ENCODE measurements at regions of chr17 and their contacts with region 1.

Region 1: DNA sequence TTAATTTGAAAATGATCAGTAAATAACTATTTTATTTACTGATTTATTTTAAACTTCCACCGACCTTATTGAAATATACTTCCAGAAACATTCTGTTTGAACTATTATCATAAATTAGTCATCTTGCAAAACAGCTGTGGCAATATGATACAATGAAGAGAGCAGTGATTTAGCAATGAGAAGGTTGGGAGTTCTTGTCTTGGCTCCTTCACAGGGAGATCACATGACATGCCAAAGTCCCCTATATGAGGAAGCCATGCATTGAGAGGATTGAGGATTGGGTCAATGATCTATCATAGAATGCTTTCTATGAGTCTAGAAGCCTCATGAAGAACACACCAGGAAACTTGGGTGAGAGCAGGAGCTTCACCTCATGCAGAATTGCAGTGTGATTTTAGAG is 222.7 kb downstream of the LGALS9B start:
- DNase-seq: no peak
- ATAC-seq: no peak
- H3K4me3 ChIP-seq: no peak overlapping the region
- H3K4me3 Mint-ChIP-seq: peak overlapping the region in 1 of 10 donors; percentile 30
- H3K27ac ChIP-seq: no peak overlapping the region
- H3K27ac Mint-ChIP-seq: peak overlapping the region in 2 of 9 donors; percentile 17 to 38
- H3K4me1 ChIP-seq: peaks cover 0 to 37% of the 10 kb centered on the region in 2 donors
- H3K4me1 Mint-ChIP-seq: peaks cover 19 to 64% (median 59%) of the 10 kb centered on the region in 7 donors
- H3K27me3 ChIP-seq: no peaks in the 10 kb centered on the region
- H3K27me3 Mint-ChIP-seq: no peaks in the 10 kb centered on the region

Region 2: GRCh38 chr17:20133517-20133916 is 111.2 kb before region 1 on chr17:
- CTCF ChIA-PET with region 1: no interaction called
- POLR2A ChIA-PET with region 1: no interaction called
- intact Hi-C with region 1: no loop called
- DNase-seq: no peak
- ATAC-seq: no peak
- H3K4me3 ChIP-seq: no peak overlapping the region
- H3K4me3 Mint-ChIP-seq: no peak overlapping the region
- H3K27ac ChIP-seq: no peak overlapping the region
- H3K27ac Mint-ChIP-seq: no peak overlapping the region
- H3K4me1 ChIP-seq: no peaks in the 10 kb centered on the region
- H3K4me1 Mint-ChIP-seq: peaks cover 0 to 2% (median 0%) of the 10 kb centered on the region in 7 donors
- H3K27me3 ChIP-seq: no peaks in the 10 kb centered on the region
- H3K27me3 Mint-ChIP-seq: peaks cover 0 to 27% (median 0%) of the 10 kb centered on the region in 5 donors

Region 3: DNA sequence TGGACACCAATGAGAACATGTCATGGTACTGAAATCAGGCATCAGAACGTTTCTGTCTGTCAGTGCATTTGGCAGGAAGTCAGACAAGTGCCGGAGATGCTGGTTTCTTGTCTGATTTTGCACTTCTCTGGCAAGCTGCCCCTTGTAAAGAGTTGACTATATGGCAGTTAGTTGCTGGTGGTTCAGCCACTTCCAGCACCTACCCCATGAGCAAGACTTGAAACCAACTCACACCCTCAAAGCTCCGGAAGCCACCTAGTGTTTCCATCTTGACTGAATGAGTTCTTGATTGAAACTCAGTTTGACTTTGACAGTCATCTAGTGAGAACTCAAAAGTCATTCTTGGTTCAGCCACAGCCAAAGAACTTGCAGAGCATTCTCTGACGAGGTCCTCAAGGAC is 10.4 kb before region 1 on chr17:
- CTCF ChIA-PET with region 1: interaction called, 11 read pairs
- POLR2A ChIA-PET with region 1: interaction called, 45 read pairs
- intact Hi-C with region 1: loop called in 1 of 2 experiments (anchors 1 kb)
- DNase-seq: peak in 8 of 9 donors; percentile 58 to 79 (median 69)
- ATAC-seq: peak; percentile 93
- H3K4me3 ChIP-seq: peak overlapping the region; percentile 19
- H3K4me3 Mint-ChIP-seq: peak overlapping the region; percentile 64 to 84 (median 69)
- H3K27ac ChIP-seq: peak overlapping the region; percentile 26
- H3K27ac Mint-ChIP-seq: peak overlapping the region; percentile 74 to 92 (median 88)
- H3K4me1 ChIP-seq: peaks cover 4 to 24% of the 10 kb centered on the region in 2 donors
- H3K4me1 Mint-ChIP-seq: peaks cover 29 to 73% (median 60%) of the 10 kb centered on the region in 7 donors
- H3K27me3 ChIP-seq: no peaks in the 10 kb centered on the region
- H3K27me3 Mint-ChIP-seq: no peaks in the 10 kb centered on the region

Region 4: DNA sequence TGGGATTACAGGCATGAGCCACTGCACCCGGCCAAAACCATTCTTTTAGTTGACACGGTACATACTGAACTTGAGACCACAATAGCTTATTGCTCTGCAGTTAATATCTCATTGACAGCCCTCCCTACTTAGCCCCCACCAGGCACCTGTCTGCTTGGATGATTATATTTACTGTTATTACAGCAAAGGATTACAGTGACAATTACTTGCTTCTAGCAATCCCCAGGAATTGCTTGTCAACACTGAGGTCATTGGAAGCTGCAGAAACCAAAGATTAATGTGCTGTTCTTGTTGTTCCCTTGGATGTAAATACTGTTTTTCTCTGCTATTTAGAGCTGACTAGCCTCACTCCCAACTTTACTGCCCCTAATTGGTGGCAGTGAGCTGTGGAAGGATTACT is 11.5 kb after region 1 on chr17:
- CTCF ChIA-PET with region 1: no interaction called
- POLR2A ChIA-PET with region 1: interaction called, 14 read pairs
- intact Hi-C with region 1: loop called in 1 of 2 experiments (anchors 2 kb)
- DNase-seq: no peak
- ATAC-seq: no peak
- H3K4me3 ChIP-seq: no peak overlapping the region
- H3K4me3 Mint-ChIP-seq: no peak overlapping the region
- H3K27ac ChIP-seq: no peak overlapping the region
- H3K27ac Mint-ChIP-seq: peak overlapping the region in 5 of 9 donors; percentile 34 to 85 (median 53)
- H3K4me1 ChIP-seq: peaks cover 0 to 32% of the 10 kb centered on the region in 2 donors
- H3K4me1 Mint-ChIP-seq: peaks cover 21 to 81% (median 70%) of the 10 kb centered on the region in 7 donors
- H3K27me3 ChIP-seq: no peaks in the 10 kb centered on the region
- H3K27me3 Mint-ChIP-seq: no peaks in the 10 kb centered on the region

Region 5: DNA sequence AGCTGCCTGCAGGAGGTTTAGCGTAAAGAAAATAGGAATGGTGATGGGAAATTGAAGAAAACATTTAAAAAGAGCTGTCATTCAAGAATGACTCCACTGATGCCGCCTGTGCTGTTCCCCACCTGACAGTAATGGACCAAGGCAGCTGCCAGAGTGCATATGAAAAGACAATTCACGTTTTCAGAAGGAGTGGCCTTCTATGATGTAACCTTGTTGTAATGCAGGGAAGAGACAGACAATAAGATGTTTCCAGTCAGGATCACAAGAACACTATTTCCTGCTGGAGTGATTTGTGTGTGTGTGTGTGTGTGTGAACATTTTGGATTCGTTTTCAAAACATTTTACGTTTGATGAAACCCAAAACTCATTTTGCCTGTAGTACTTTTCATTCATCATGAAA is 18.9 kb after region 1 on chr17:
- CTCF ChIA-PET with region 1: interaction called, 3 read pairs
- POLR2A ChIA-PET with region 1: interaction called, 5 read pairs
- intact Hi-C with region 1: loop called in 1 of 2 experiments (anchors 2 kb)
- DNase-seq: no peak
- ATAC-seq: no peak
- H3K4me3 ChIP-seq: no peak overlapping the region
- H3K4me3 Mint-ChIP-seq: peak overlapping the region in 5 of 10 donors; percentile 15 to 75 (median 47)
- H3K27ac ChIP-seq: no peak overlapping the region
- H3K27ac Mint-ChIP-seq: peak overlapping the region in 8 of 9 donors; percentile 36 to 96 (median 80)
- H3K4me1 ChIP-seq: peaks cover 4 to 47% of the 10 kb centered on the region in 2 donors
- H3K4me1 Mint-ChIP-seq: peaks cover 27 to 90% (median 79%) of the 10 kb centered on the region in 7 donors
- H3K27me3 ChIP-seq: no peaks in the 10 kb centered on the region
- H3K27me3 Mint-ChIP-seq: no peaks in the 10 kb centered on the region

Region 6: GRCh38 chr17:20271011-20271610 is 26.4 kb after region 1 on chr17:
- CTCF ChIA-PET with region 1: interaction called, 3 read pairs
- POLR2A ChIA-PET with region 1: interaction called, 6 read pairs
- intact Hi-C with region 1: loop called in 1 of 2 experiments (anchors 1 kb)
- DNase-seq: peak in 6 of 9 donors; percentile 10 to 65 (median 54)
- ATAC-seq: peak; percentile 41
- H3K4me3 ChIP-seq: no peak overlapping the region
- H3K4me3 Mint-ChIP-seq: peak overlapping the region; percentile 40 to 83 (median 71)
- H3K27ac ChIP-seq: peak overlapping the region; percentile 25
- H3K27ac Mint-ChIP-seq: peak overlapping the region; percentile 68 to 98 (median 90)
- H3K4me1 ChIP-seq: peaks cover 11 to 85% of the 10 kb centered on the region in 2 donors
- H3K4me1 Mint-ChIP-seq: peaks cover 48 to 98% (median 90%) of the 10 kb centered on the region in 7 donors
- H3K27me3 ChIP-seq: no peaks in the 10 kb centered on the region
- H3K27me3 Mint-ChIP-seq: no peaks in the 10 kb centered on the region